CD4-positive, alpha-beta T cell (primary cell): ENCODE measurements at regions of chr12 and their contacts with region 1.

Region 1: GRCh38 chr12:29427964-29428363 is 47.0 kb upstream of the ERGIC2 start:
- DNase-seq: peak in 5 of 14 experiments; percentile 1 to 47 (median 35)
- ATAC-seq: peak; percentile 74
- H3K4me3 ChIP-seq: no peak overlapping the region
- H3K4me3 Mint-ChIP-seq: no peak overlapping the region
- H3K27ac ChIP-seq: no peak overlapping the region
- H3K27ac Mint-ChIP-seq: no peak overlapping the region
- H3K4me1 ChIP-seq: no peaks in the 10 kb centered on the region
- H3K4me1 Mint-ChIP-seq: no peaks in the 10 kb centered on the region
- H3K27me3 ChIP-seq: no peaks in the 10 kb centered on the region
- H3K27me3 Mint-ChIP-seq: peaks cover 22% of the 10 kb centered on the region
- CTCF ChIP-seq: peak; percentile 63

Region 2: GRCh38 chr12:29088611-29089219 is 339.2 kb before region 1 on chr12:
- CTCF ChIA-PET with region 1: no interaction called
- POLR2A ChIA-PET with region 1: no interaction called
- intact Hi-C with region 1: loop called in 1 of 2 experiments (anchors 10 kb)
- DNase-seq: peak in 2 of 14 experiments; percentile 34 to 41
- ATAC-seq: peak; percentile 46
- H3K4me3 ChIP-seq: no peak overlapping the region
- H3K4me3 Mint-ChIP-seq: no peak overlapping the region
- H3K27ac ChIP-seq: no peak overlapping the region
- H3K27ac Mint-ChIP-seq: no peak overlapping the region
- H3K4me1 ChIP-seq: no peaks in the 10 kb centered on the region
- H3K4me1 Mint-ChIP-seq: peaks cover 4% of the 10 kb centered on the region
- H3K27me3 ChIP-seq: no peaks in the 10 kb centered on the region
- H3K27me3 Mint-ChIP-seq: no peaks in the 10 kb centered on the region
- CTCF ChIP-seq: peak; percentile 67

Region 3: GRCh38 chr12:29309320-29309902 is 118.6 kb before region 1 on chr12:
- CTCF ChIA-PET with region 1: no interaction called
- POLR2A ChIA-PET with region 1: no interaction called
- intact Hi-C with region 1: loop called (anchors 2 to 5 kb)
- DNase-seq: peak in 3 of 14 experiments; percentile 7 to 14 (median 11)
- ATAC-seq: no peak
- H3K4me3 ChIP-seq: no peak overlapping the region
- H3K4me3 Mint-ChIP-seq: no peak overlapping the region
- H3K27ac ChIP-seq: no peak overlapping the region
- H3K27ac Mint-ChIP-seq: no peak overlapping the region
- H3K4me1 ChIP-seq: no peaks in the 10 kb centered on the region
- H3K4me1 Mint-ChIP-seq: no peaks in the 10 kb centered on the region
- H3K27me3 ChIP-seq: no peaks in the 10 kb centered on the region
- H3K27me3 Mint-ChIP-seq: no peaks in the 10 kb centered on the region
- CTCF ChIP-seq: peak; percentile 54

Region 4: GRCh38 chr12:29591140-29592020 is 163.4 kb after region 1 on chr12:
- CTCF ChIA-PET with region 1: no interaction called
- POLR2A ChIA-PET with region 1: no interaction called
- intact Hi-C with region 1: no loop called
- DNase-seq: no peak
- ATAC-seq: no peak
- H3K4me3 ChIP-seq: no peak overlapping the region
- H3K4me3 Mint-ChIP-seq: no peak overlapping the region
- H3K27ac ChIP-seq: no peak overlapping the region
- H3K27ac Mint-ChIP-seq: no peak overlapping the region
- H3K4me1 ChIP-seq: no peaks in the 10 kb centered on the region
- H3K4me1 Mint-ChIP-seq: no peaks in the 10 kb centered on the region
- H3K27me3 ChIP-seq: peaks cover 0 to 5% of the 10 kb centered on the region in 2 experiments
- H3K27me3 Mint-ChIP-seq: peaks cover 12% of the 10 kb centered on the region
- CTCF ChIP-seq: no peak